Naive thymus-derived CD4-positive, alpha-beta T cell (primary cell): ENCODE measurements at regions of chr11 and their contacts with region 1.

Region 1: GRCh38 chr11:73982969-73983740 is 512 bp upstream of the UCP2 start:
- DNase-seq: peak; percentile 83 to 94 (median 92)
- ATAC-seq: peak; percentile 86
- H3K4me3 ChIP-seq: peak overlapping the region; percentile 93
- H3K4me3 Mint-ChIP-seq: peak overlapping the region; percentile 93 to 100 (median 99)
- H3K27ac ChIP-seq: peak overlapping the region; percentile 96
- H3K27ac Mint-ChIP-seq: peak overlapping the region; percentile 98 to 100 (median 99)
- H3K4me1 ChIP-seq: peaks cover 26 to 31% of the 10 kb centered on the region in 2 donors
- H3K4me1 Mint-ChIP-seq: peaks cover 29 to 55% (median 44%) of the 10 kb centered on the region in 7 donors
- H3K27me3 ChIP-seq: no peaks in the 10 kb centered on the region
- H3K27me3 Mint-ChIP-seq: no peaks in the 10 kb centered on the region

Region 2: GRCh38 chr11:73429121-73429750 is 553.9 kb before region 1 on chr11:
- CTCF ChIA-PET with region 1: no interaction called
- POLR2A ChIA-PET with region 1: no interaction called
- intact Hi-C with region 1: no loop called
- DNase-seq: no peak
- ATAC-seq: no peak
- H3K4me3 ChIP-seq: no peak overlapping the region
- H3K4me3 Mint-ChIP-seq: no peak overlapping the region
- H3K27ac ChIP-seq: no peak overlapping the region
- H3K27ac Mint-ChIP-seq: no peak overlapping the region
- H3K4me1 ChIP-seq: no peaks in the 10 kb centered on the region
- H3K4me1 Mint-ChIP-seq: peaks cover 0 to 9% (median 0%) of the 10 kb centered on the region in 7 donors
- H3K27me3 ChIP-seq: no peaks in the 10 kb centered on the region
- H3K27me3 Mint-ChIP-seq: no peaks in the 10 kb centered on the region

Region 3: DNA sequence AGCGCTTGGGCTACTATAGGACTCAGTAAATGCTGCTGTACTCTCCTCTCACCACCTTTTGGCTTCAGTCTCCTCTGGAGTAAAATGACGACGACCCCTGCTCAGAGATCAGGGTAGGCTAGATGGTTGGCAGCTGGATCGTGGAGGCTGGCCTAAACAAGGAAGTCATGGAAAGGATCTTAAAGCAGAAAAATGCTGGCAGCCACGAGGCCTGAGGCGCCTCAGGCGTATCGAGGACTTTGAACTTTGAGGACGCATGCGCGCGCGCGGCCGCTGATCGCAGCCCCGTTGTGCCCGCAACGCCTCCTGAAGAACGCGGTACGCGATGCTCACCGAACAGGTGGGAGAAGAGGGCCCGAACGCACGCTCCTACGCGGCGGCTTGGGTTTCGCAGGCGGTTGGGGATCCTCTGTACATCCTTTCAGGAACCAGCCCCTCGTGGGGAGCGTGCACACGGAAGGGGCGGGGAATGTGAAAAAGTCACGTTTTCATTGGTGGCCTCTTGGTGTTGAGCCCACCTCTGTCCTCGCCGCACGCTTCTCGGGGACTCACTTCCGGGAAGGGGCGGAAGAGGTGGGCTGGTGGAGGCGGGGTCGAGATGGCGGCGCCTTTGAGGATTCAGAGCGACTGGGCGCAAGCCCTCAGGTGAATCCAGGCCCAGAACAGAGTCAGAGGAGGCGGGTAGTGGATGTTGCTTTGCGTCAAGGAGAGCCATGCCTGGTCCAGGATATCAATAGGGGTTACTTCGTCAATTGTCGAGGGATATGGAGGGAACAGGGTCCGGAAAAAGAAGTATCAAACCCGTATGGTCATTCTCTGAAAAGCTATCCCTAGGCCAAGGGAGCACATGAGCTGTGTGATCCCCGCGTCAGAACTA is 106.5 kb before region 1 on chr11 and contains the starts of genes COA4 and PAAF1:
- CTCF ChIA-PET with region 1: no interaction called
- POLR2A ChIA-PET with region 1: no interaction called
- intact Hi-C with region 1: loop called in 1 of 2 experiments (anchors 1 kb)
- DNase-seq: peak; percentile 72 to 95 (median 94)
- ATAC-seq: peak; percentile 99
- H3K4me3 ChIP-seq: peak within 1 kb of the TSS; percentile 94
- H3K4me3 Mint-ChIP-seq: peak within 1 kb of the TSS; percentile 94 to 98 (median 96)
- H3K27ac ChIP-seq: peak within 1 kb of the TSS; percentile 88
- H3K27ac Mint-ChIP-seq: peak within 1 kb of the TSS; percentile 92 to 100 (median 97)
- H3K4me1 ChIP-seq: peaks cover 17 to 19% of the 10 kb centered on the region in 2 donors
- H3K4me1 Mint-ChIP-seq: peaks cover 20 to 55% (median 43%) of the 10 kb centered on the region in 7 donors
- H3K27me3 ChIP-seq: no peaks in the 10 kb centered on the region
- H3K27me3 Mint-ChIP-seq: no peaks in the 10 kb centered on the region
- total RNA-seq, gene COA4: 29.1 to 75.0 (median 58.2) TPM
- total RNA-seq, gene PAAF1: 12.4 to 22.7 (median 20.3) TPM

Region 4: DNA sequence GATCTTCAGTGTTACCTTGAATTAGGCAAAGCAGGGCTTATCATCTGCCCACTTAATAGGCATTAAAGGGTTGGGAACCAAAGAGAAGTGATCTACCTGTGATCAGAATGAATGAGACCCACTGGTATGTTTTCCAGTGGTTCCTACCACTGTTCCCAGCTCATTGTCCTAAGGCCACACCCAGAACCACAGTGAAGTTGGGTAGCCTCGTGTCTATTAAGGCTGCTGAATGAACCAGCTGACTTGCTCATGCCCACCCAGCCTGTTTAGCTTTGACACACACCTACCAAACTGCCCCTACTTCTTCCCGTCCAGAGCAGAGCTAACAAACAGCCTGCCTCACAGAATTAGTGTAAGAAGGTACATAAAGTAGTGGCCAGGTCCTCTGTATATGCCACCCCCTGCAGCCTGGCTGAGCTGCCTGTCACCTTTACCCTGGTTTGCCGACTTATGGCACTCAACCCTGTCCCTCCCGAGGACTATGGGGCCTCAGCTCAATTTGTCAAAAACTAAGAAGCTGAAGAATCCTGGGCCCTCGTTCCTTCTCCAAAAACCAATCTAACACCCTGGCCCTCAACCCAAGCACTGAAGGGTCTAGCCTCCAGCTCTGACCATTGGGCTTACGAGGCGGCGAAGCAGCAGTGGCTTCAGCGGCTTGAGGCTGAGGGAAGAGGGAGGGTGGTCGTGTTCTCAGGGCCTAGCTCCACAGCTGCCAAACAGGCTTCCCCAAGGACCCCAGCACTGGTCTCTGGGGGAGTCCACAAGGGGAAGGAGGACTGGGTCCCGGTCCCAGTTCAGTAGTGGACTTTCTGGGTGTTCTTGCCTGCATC is 10.3 kb before region 1 on chr11:
- CTCF ChIA-PET with region 1: interaction called, 9 read pairs
- POLR2A ChIA-PET with region 1: interaction called, 1,403 read pairs
- intact Hi-C with region 1: loop called (anchors 1 kb)
- DNase-seq: no peak
- ATAC-seq: no peak
- H3K4me3 ChIP-seq: no peak overlapping the region
- H3K4me3 Mint-ChIP-seq: peak overlapping the region in 9 of 10 donors; percentile 0 to 96 (median 58)
- H3K27ac ChIP-seq: peak overlapping the region; percentile 59
- H3K27ac Mint-ChIP-seq: peak overlapping the region; percentile 79 to 100 (median 98)
- H3K4me1 ChIP-seq: peaks cover 86 to 93% of the 10 kb centered on the region in 2 donors
- H3K4me1 Mint-ChIP-seq: peaks cover 74 to 100% (median 89%) of the 10 kb centered on the region in 7 donors
- H3K27me3 ChIP-seq: no peaks in the 10 kb centered on the region
- H3K27me3 Mint-ChIP-seq: no peaks in the 10 kb centered on the region

Region 5: GRCh38 chr11:74004759-74005615 is 21.8 kb after region 1 on chr11:
- CTCF ChIA-PET with region 1: interaction called, 24 read pairs
- POLR2A ChIA-PET with region 1: interaction called, 1,403 read pairs
- intact Hi-C with region 1: loop called in 1 of 2 experiments (anchors 1 kb)
- DNase-seq: peak; percentile 55 to 94 (median 91)
- ATAC-seq: peak; percentile 100
- H3K4me3 ChIP-seq: peak overlapping the region; percentile 44
- H3K4me3 Mint-ChIP-seq: peak overlapping the region; percentile 74 to 91 (median 83)
- H3K27ac ChIP-seq: peak overlapping the region; percentile 75
- H3K27ac Mint-ChIP-seq: peak overlapping the region; percentile 92 to 99 (median 96)
- H3K4me1 ChIP-seq: peaks cover 60 to 62% of the 10 kb centered on the region in 2 donors
- H3K4me1 Mint-ChIP-seq: peaks cover 48 to 85% (median 78%) of the 10 kb centered on the region in 7 donors
- H3K27me3 ChIP-seq: no peaks in the 10 kb centered on the region
- H3K27me3 Mint-ChIP-seq: no peaks in the 10 kb centered on the region

Region 6: DNA sequence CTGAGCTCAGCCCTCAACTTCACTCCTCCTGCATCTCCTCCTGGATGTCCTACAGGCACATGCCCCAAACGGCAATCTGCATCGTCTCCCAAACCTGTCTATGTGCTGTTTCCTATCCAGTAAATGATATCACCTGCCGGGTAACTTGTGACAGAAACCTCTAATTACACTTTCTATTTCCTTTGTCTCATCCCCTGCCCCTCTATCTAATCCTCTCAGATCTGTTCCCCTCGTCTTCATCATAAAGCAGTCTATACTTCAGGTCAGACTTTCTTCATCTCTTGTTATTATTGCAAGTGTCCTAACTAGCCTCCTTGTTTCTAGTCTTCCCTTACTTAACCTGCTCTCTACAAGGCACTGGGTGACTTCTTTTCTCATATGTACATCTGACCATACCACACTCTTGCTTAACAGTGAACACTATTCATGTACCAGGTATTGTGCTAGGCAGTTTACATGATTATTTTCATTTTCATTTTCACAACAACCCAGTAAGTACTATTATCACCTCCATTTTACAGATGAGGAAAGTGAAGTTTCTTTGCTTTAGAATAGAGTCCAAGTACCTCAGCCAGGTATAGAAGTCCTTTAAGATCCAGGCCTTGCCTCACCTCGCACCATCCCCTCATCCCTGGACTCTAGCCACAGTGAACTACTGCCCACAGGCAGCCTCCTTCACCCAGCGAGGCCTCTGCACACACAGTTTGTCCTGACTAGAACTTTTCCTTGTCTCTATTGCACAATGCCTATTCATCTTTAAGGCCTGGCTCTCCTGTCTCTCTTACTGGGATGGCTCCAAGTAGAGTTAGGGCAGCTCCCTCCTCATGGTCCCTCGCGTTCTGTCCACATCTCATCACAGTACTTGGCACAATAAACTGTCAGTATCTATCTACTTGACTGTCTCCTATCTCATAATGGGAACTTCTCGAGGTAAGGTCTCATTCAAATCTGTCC is 47.8 kb after region 1 on chr11:
- CTCF ChIA-PET with region 1: interaction called, 21 read pairs
- POLR2A ChIA-PET with region 1: interaction called, 12 read pairs
- intact Hi-C with region 1: loop called (anchors 1 to 5 kb)
- DNase-seq: no peak
- ATAC-seq: peak; percentile 52
- H3K4me3 ChIP-seq: no peak overlapping the region
- H3K4me3 Mint-ChIP-seq: peak overlapping the region in 6 of 10 donors; percentile 3 to 70 (median 16)
- H3K27ac ChIP-seq: no peak overlapping the region
- H3K27ac Mint-ChIP-seq: peak overlapping the region in 8 of 9 donors; percentile 3 to 91 (median 44)
- H3K4me1 ChIP-seq: peaks cover 0 to 7% of the 10 kb centered on the region in 2 donors
- H3K4me1 Mint-ChIP-seq: peaks cover 17 to 39% (median 25%) of the 10 kb centered on the region in 7 donors
- H3K27me3 ChIP-seq: no peaks in the 10 kb centered on the region
- H3K27me3 Mint-ChIP-seq: no peaks in the 10 kb centered on the region

Region 7: DNA sequence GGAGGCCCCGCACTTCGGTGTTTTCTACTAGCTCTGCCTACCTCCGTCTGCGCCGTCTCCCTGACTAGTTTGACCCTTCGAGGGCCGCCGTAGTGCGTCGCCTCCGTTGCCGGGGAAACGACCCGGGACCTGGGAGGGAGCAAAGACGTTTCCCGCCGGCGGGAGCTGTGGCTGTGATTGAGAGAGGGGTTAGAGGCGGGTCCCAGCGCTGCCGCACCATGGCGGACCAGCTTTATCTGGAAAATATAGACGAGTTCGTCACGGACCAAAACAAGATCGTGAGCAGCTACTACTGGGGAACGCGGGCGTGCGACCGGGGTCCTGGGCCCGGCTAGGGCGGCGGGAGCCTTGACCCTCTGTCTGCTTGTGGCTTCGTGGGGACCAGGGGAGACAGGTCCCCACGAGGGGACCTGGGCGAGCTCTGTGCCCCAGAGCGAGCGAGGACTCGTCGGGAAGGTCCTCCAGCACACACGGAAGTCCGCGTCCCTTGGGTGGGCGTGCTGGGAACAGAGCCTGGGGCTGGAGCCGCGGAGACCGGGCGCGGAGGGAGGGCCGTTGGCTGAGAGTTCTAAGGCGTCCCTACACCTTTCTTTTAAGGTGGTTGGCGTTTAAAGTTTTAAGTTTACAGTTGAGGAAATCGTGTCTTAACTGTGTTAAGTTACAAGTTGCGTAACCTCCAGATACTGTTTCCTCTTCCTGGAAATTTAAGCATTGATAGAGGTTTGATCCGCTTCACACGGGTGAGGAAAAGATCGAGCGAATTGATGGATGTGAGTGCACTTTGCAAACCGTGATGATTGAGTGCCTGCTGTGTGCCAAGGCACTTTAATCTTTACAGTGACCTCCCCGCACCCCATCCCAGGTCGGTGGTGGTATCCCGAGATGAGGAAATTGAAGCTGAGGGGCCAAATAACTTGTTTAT is 609.5 kb after region 1 on chr11 and contains the start of gene POLD3:
- CTCF ChIA-PET with region 1: no interaction called
- POLR2A ChIA-PET with region 1: no interaction called
- intact Hi-C with region 1: loop called in 1 of 2 experiments (anchors 5 kb)
- DNase-seq: peak; percentile 83 to 97 (median 94)
- ATAC-seq: peak; percentile 99
- H3K4me3 ChIP-seq: peak within 1 kb of the TSS; percentile 98
- H3K4me3 Mint-ChIP-seq: peak within 1 kb of the TSS; percentile 90 to 100 (median 92)
- H3K27ac ChIP-seq: peak within 1 kb of the TSS; percentile 96
- H3K27ac Mint-ChIP-seq: peak within 1 kb of the TSS; percentile 90 to 99 (median 95)
- H3K4me1 ChIP-seq: peaks cover 9% of the 10 kb centered on the region in 2 donors
- H3K4me1 Mint-ChIP-seq: peaks cover 7 to 33% (median 27%) of the 10 kb centered on the region in 7 donors
- H3K27me3 ChIP-seq: no peaks in the 10 kb centered on the region
- H3K27me3 Mint-ChIP-seq: peaks cover 0 to 5% (median 0%) of the 10 kb centered on the region in 5 donors
- total RNA-seq, gene POLD3: 8.0 to 40.8 (median 14.7) TPM